Naive thymus-derived CD8-positive, alpha-beta T cell (primary cell): ENCODE measurements at regions of chr2 and their contacts with region 1.

Region 1: GRCh38 chr2:157404363-157404762 is 39.5 kb downstream of the CYTIP start:
- DNase-seq: peak; percentile 25 to 92 (median 74)
- ATAC-seq: peak; percentile 93 to 97
- H3K4me3 Mint-ChIP-seq: peak overlapping the region; percentile 48 to 77 (median 66)
- H3K27ac Mint-ChIP-seq: peak overlapping the region; percentile 97 to 100 (median 98)
- H3K4me1 Mint-ChIP-seq: peaks cover 34 to 76% (median 68%) of the 10 kb centered on the region in 4 donors
- H3K27me3 Mint-ChIP-seq: no peaks in the 10 kb centered on the region

Region 2: DNA sequence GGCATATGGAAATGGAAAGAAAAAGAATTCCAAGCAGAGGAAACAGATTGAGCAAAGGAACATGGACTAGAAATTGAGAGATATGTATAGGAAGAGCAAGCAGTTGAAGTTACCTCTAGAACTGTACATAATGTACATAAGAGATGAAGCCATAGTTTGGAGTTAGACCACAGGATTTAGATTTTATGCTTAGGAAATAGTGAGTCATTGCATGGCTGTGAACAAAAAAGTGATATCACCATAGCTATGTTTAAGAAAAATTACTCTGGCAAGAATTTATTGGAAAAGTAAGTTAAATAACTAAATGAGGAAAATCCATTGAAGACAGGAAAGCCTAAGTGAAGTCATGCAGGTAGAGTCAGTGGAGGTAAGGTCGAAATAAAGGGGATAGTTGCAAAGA is 246.3 kb before region 1 on chr2:
- POLR2A ChIA-PET with region 1: no interaction called
- DNase-seq: no peak
- ATAC-seq: no peak
- H3K4me3 Mint-ChIP-seq: no peak overlapping the region
- H3K27ac Mint-ChIP-seq: no peak overlapping the region
- H3K4me1 Mint-ChIP-seq: no peaks in the 10 kb centered on the region
- H3K27me3 Mint-ChIP-seq: peaks cover 2 to 25% (median 6%) of the 10 kb centered on the region in 5 donors

Region 3: DNA sequence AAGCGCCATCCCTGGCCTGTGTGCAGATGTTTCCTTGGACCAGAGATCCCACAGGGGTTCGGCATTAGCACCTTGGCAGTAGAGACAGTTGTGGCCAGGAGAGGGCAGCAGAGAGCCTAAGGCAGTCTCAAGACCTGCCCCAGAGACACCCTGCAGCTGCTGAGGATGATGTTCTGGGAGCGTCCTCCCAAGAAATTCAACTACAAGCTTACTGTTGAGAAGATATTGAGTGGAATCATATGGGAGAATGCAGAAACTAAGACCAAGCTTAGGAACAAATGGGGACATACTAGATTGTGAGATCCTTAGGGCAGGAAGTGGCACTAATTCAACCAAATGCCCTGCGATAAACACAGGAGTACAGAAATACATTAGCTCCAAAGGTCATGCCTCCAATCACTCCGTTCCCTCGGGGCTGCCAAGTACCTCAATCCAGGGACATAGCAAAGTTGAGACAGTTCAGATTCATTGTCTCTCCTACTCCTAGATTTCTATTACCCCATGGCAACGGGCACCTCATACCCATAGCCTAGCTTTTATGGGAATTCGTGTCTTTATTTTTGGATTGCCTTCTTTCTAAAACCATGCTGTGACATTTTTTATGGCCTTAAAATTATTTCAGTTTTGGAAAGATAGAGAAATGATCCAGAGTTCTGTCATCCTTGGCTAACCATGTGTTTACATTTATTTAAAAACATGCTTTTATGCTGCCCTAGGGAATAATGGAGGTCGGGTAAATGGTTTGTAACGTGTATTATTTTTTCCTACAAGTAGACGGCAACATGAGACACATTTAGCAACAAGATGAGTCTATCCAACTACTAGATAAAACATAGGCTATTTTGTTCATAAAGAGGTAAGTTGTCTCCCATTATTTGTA is 76.5 kb before region 1 on chr2:
- POLR2A ChIA-PET with region 1: interaction called, 131 read pairs
- DNase-seq: peak; percentile 74 to 92 (median 82)
- ATAC-seq: peak; percentile 88 to 90
- H3K4me3 Mint-ChIP-seq: peak overlapping the region; percentile 51 to 84 (median 70)
- H3K27ac Mint-ChIP-seq: peak overlapping the region; percentile 8 to 96 (median 93)
- H3K4me1 Mint-ChIP-seq: peaks cover 25 to 55% (median 53%) of the 10 kb centered on the region in 4 donors
- H3K27me3 Mint-ChIP-seq: no peaks in the 10 kb centered on the region

Region 4: DNA sequence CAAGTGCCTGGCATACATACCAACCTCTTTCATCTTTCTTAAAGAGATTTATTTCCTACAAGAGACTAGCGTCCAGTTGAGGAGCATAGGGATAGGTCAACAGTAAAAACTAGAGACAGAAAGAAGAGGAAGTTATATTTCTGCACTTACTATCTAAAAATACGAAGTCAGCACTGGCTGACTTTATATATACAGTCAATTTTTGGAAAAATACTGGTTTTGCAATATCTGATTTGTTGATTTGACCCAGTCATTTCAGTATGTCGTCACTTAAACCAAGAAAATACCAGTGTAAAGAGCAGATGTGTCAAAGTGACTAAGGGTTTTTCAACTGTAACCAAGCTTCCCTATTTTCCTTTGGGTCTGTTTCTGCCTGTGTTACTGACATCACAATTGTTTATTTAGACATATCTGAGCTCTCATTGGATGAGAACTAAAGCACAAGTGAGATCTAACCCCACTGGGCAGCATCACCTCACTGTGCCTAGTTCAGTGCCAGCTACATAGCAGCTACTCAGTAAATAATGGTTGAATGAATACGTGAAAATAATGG is 16.5 kb after region 1 on chr2:
- POLR2A ChIA-PET with region 1: interaction called, 124 read pairs
- DNase-seq: no peak
- ATAC-seq: peak; percentile 2 to 6
- H3K4me3 Mint-ChIP-seq: peak overlapping the region; percentile 31 to 78 (median 62)
- H3K27ac Mint-ChIP-seq: peak overlapping the region; percentile 88 to 99 (median 93)
- H3K4me1 Mint-ChIP-seq: peaks cover 22 to 85% (median 69%) of the 10 kb centered on the region in 4 donors
- H3K27me3 Mint-ChIP-seq: no peaks in the 10 kb centered on the region

Region 5: GRCh38 chr2:157433394-157433793 is 29.0 kb after region 1 on chr2:
- POLR2A ChIA-PET with region 1: interaction called, 90 read pairs
- DNase-seq: no peak
- ATAC-seq: peak; percentile 21 to 40
- H3K4me3 Mint-ChIP-seq: peak overlapping the region; percentile 84 to 99 (median 94)
- H3K27ac Mint-ChIP-seq: peak overlapping the region; percentile 90 to 100 (median 93)
- H3K4me1 Mint-ChIP-seq: peaks cover 53 to 93% (median 82%) of the 10 kb centered on the region in 4 donors
- H3K27me3 Mint-ChIP-seq: no peaks in the 10 kb centered on the region